ENCODE measurements at regions of chr4 and their contacts with region 1.

Region 1: DNA sequence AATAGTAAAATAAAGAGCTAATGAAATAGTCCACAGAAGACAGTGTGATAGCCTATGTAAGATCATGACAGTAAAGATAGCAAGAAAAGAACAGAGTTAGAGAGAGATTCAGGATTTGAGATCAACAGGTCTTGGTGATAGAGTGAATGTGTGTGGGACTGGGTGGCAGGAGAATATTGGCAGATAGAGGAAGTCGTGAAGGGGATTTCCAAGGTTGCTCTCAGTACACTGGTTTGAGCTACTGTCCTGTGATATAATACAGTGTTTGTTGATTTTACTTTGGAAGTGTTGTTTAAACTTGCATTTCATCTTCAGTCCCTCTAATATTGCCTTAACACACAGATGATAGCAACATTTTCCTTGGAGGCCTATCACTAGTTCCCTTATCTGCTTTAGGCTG is 44.1 kb downstream of the DTHD1 start:
- DNase-seq: peak in 7 of 35 experiments; percentile 6 to 70 (median 15)
- ATAC-seq: peak in 3 of 4 experiments; percentile 47 to 59 (median 49)
- H3K4me3 ChIP-seq: no peak overlapping the region
- H3K4me3 Mint-ChIP-seq: no peak overlapping the region
- H3K27ac ChIP-seq: peak overlapping the region; percentile 59
- H3K27ac Mint-ChIP-seq: peak overlapping the region; percentile 62 to 64
- H3K4me1 ChIP-seq: peaks cover 26 to 29% of the 10 kb centered on the region in 2 experiments
- H3K4me1 Mint-ChIP-seq: peaks cover 44 to 54% (median 45%) of the 10 kb centered on the region in 3 donors
- H3K27me3 ChIP-seq: no peaks in the 10 kb centered on the region
- H3K27me3 Mint-ChIP-seq: no peaks in the 10 kb centered on the region

Region 2: GRCh38 chr4:36303426-36304137 is 21.9 kb before region 1 on chr4:
- CTCF ChIA-PET with region 1: no interaction called
- POLR2A ChIA-PET with region 1: no interaction called
- DNase-seq: no peak
- ATAC-seq: no peak
- H3K4me3 ChIP-seq: no peak overlapping the region
- H3K4me3 Mint-ChIP-seq: no peak overlapping the region
- H3K27ac ChIP-seq: no peak overlapping the region
- H3K27ac Mint-ChIP-seq: no peak overlapping the region
- H3K4me1 ChIP-seq: no peaks in the 10 kb centered on the region
- H3K4me1 Mint-ChIP-seq: peaks cover 0 to 9% (median 6%) of the 10 kb centered on the region in 3 donors
- H3K27me3 ChIP-seq: no peaks in the 10 kb centered on the region
- H3K27me3 Mint-ChIP-seq: no peaks in the 10 kb centered on the region

Region 3: GRCh38 chr4:36794716-36795115 is 469.2 kb after region 1 on chr4:
- CTCF ChIA-PET with region 1: no interaction called
- POLR2A ChIA-PET with region 1: no interaction called
- DNase-seq: no peak
- ATAC-seq: no peak
- H3K4me3 ChIP-seq: no peak overlapping the region
- H3K4me3 Mint-ChIP-seq: no peak overlapping the region
- H3K27ac ChIP-seq: no peak overlapping the region
- H3K27ac Mint-ChIP-seq: no peak overlapping the region
- H3K4me1 ChIP-seq: no peaks in the 10 kb centered on the region
- H3K4me1 Mint-ChIP-seq: no peaks in the 10 kb centered on the region
- H3K27me3 ChIP-seq: no peaks in the 10 kb centered on the region
- H3K27me3 Mint-ChIP-seq: peaks cover 2 to 5% of the 10 kb centered on the region in 2 donors

Region 4: GRCh38 chr4:37908488-37909331 is 1583.2 kb after region 1 on chr4:
- CTCF ChIA-PET with region 1: no interaction called
- POLR2A ChIA-PET with region 1: interaction called in 1 of 2 experiments, 10 read pairs
- DNase-seq: no peak
- ATAC-seq: no peak
- H3K4me3 ChIP-seq: no peak overlapping the region
- H3K4me3 Mint-ChIP-seq: no peak overlapping the region
- H3K27ac ChIP-seq: no peak overlapping the region
- H3K27ac Mint-ChIP-seq: no peak overlapping the region
- H3K4me1 ChIP-seq: no peaks in the 10 kb centered on the region
- H3K4me1 Mint-ChIP-seq: peaks cover 58 to 68% (median 60%) of the 10 kb centered on the region in 3 donors
- H3K27me3 ChIP-seq: no peaks in the 10 kb centered on the region
- H3K27me3 Mint-ChIP-seq: no peaks in the 10 kb centered on the region

Measured in T-cell (primary cell).